Uterus (tissue), 4 donors: ENCODE measurements at regions of chr1 and their contacts with region 1.

Region 1: DNA sequence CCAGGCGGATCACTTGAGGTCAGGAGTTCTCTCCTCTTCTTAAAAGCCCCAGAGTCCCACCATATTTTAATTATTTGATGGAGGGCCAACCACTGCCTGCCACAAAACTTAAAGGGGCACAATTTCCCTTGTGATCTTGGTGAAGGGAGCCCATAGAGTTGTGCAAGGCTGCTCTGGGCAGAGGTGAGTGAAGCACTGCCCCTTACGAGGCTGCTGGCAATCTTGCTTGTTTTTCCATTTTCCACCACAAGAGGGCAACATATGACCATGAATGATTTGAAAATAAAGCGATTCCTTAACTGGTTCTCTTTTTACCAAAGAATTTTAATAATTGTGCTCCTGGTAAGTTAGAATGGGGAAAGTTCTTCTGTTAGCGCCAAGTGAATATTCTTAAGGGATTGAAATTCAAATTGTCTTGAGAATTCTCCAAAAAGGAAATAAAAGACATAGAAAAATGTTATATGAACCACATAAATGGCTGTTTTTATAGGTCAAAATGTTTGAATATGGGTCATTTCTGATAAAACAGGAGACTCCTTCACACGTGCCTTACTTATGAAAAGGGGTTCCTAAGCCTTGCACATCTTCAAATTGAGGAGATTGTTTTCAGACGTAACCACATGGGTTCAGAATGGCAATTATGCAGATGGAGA is 22.7 kb downstream of the PGM1 start:
- DNase-seq: peak; percentile 45 to 67
- H3K4me3 ChIP-seq: no peak overlapping the region
- H3K27ac ChIP-seq: no peak overlapping the region
- H3K4me1 ChIP-seq: peaks cover 0 to 4% of the 10 kb centered on the region in 2 donors
- H3K27me3 ChIP-seq: no peaks in the 10 kb centered on the region
- CTCF ChIP-seq: peak; percentile 75 to 83 (median 80)
- POLR2A ChIP-seq: no peak

Region 2: GRCh38 chr1:63813829-63814277 is 198.0 kb after region 1 on chr1:
- intact Hi-C with region 1: no loop called
- DNase-seq: peak; percentile 30 to 52
- H3K4me3 ChIP-seq: no peak overlapping the region
- H3K27ac ChIP-seq: peak overlapping the region; percentile 68 to 88
- H3K4me1 ChIP-seq: no peaks in the 10 kb centered on the region
- H3K27me3 ChIP-seq: no peaks in the 10 kb centered on the region
- CTCF ChIP-seq: no peak
- POLR2A ChIP-seq: no peak

Region 3: DNA sequence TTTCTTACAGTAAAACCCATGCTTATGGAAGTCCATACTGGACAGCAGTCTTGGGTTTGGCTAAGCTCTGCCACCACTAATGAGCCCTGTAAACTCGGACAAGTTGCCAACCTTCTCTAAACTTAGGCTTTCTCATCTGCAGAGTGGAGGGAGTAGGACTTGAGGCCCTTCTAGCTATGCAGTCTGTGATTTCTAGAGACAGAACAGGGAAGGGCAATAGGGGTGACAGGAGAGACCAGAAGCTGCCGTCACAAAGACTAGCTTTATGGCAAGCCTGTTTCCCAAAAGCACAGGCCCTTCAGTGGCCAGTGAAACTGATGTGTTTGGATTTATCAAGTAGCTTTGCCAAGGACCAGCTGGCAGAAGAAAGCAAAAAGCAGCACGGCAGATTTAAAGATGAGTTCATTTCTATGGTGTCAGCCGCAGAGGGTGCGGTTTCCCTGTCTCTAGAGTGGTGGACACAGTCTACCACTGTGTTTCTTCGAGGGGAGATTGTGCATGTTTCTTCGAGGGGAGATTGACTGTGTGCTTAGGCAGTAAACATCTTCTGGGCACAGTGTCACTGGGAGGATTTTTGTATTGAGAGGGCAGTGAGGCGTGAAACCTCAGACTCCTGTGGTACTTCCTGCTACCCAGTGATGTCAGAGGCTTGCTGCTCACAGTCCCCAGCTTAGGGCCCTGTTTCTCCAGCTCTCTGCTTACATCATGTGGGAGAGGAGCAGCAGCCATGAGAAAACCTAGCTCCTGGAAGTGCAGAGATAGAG is 276.9 kb after region 1 on chr1:
- intact Hi-C with region 1: no loop called
- DNase-seq: no peak
- H3K4me3 ChIP-seq: no peak overlapping the region
- H3K27ac ChIP-seq: no peak overlapping the region
- H3K4me1 ChIP-seq: no peaks in the 10 kb centered on the region
- H3K27me3 ChIP-seq: no peaks in the 10 kb centered on the region
- CTCF ChIP-seq: no peak
- POLR2A ChIP-seq: no peak

Region 4: DNA sequence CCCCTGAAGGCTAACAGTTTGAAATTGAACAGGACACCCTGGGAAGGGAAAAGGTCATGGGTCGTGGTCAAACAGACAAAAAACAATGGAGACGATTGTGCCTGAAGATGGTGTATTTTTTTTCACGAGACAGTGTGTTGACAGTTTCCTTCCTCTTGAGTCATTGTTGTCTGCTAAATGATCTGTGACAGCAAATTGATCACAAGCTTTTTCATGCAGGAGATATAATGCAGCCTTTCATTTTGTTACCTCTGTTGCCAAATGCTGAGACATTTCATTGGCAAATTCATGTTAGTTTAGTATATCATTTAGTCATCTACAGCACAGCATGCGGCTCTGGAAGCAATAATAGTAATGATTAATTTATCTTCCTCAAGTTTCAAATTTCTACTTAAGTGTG is 615.3 kb after region 1 on chr1:
- intact Hi-C with region 1: loop called (anchors 5 kb)
- DNase-seq: no peak
- H3K4me3 ChIP-seq: no peak overlapping the region
- H3K27ac ChIP-seq: no peak overlapping the region
- H3K4me1 ChIP-seq: no peaks in the 10 kb centered on the region
- H3K27me3 ChIP-seq: no peaks in the 10 kb centered on the region
- CTCF ChIP-seq: no peak
- POLR2A ChIP-seq: no peak

Region 5: DNA sequence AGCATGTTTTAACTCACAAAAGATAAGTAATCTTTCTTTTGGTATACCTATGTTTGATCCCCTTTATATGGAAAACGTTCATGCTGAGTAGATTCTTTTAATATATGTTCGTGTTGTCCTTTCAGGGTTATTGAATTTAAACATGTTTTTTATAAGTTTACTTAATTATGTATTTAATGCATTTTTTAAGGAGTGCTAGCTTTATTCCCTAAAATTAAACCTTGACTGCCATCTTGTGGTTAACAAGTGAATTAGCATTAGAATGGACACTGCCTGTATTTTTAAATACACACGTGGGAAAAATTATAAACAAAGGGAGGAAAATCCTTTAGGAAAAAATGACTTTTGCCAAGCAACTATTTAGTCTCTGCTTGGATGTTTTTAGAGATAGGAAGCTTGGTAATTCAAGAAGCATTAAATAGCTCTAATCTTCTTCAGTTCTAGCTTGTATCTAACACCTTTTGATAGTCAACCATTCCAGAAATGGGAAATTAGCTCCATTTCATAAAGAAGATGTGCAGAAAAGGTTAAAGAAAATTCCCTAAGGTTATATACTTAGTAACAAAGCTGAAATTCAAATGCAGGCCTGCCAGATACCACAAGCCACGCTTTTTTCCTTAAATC is 630.5 kb after region 1 on chr1:
- intact Hi-C with region 1: loop called (anchors 5 kb)
- DNase-seq: no peak
- H3K4me3 ChIP-seq: no peak overlapping the region
- H3K27ac ChIP-seq: no peak overlapping the region
- H3K4me1 ChIP-seq: no peaks in the 10 kb centered on the region
- H3K27me3 ChIP-seq: no peaks in the 10 kb centered on the region
- CTCF ChIP-seq: peak; percentile 72 to 80 (median 76)
- POLR2A ChIP-seq: no peak